ENCODE measurements at regions of chr9 and their contacts with region 1.

Region 1: DNA sequence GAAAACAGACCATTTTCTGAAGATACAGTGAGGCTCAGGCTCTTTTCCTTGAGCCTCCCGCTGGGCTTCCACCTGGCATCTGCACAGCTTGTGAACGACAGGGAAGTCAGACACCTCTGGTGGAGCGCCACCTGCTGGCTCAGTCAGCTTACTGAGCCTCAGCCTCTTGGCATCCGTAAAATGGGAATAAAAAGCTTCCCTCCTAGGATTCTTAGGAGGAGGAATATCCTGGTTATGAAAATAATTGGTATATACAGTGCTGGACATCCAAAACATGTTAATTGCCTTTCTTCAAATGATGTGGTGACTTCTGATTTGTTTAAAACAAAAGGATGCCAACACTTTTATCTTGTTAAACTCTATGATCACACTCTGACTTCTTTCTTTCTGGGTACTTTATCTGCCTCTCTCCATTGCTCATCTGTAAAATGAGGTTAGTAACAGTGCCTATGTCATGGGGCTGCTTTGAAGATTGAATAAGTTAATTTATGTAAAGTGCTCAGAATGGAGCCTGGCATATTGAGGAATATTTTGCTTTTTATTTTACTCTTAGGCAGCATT is 67.5 kb downstream of the MAMDC2 start:
- H3K4me3 ChIP-seq: no peak overlapping the region
- H3K27ac ChIP-seq: no peak overlapping the region
- H3K4me1 ChIP-seq: no peaks in the 10 kb centered on the region
- CTCF ChIP-seq: peak; percentile 48; the same call in 1 of the 2 replicates

Region 2: DNA sequence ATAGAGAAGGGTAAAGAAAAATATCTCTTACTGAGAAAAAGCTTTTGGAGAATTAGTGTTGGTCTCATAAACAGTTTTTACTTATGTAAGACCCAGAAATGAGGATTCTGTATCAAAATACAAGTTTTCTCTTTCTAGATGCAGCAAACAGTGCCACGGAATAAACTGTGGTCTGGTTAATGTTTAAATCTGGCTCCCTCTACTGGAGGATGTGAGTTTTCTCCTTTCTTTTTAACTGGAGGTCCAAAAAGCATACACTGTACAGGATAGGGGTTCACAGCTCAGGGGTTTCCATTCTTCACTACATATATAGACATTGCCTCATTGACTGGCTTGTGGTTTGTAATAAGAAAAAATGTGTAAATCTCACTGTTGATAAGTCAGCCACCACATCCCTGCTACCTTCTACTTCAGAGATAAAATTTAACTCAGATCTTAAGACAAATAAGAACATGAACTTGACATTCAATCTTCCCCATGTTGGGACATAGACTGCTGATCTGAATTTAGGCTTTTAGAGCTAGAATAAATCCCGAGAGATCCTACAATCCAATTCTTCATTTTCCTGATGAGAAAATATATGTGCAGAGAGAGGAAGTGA is 191.6 kb before region 1 on chr9:
- CTCF ChIA-PET with region 1: interaction called, 22 read pairs
- POLR2A ChIA-PET with region 1: no interaction called
- H3K4me3 ChIP-seq: no peak overlapping the region
- H3K27ac ChIP-seq: no peak overlapping the region
- H3K4me1 ChIP-seq: no peaks in the 10 kb centered on the region
- CTCF ChIP-seq: no peak

Region 3: GRCh38 chr9:69981686-69982450 is 129.3 kb before region 1 on chr9:
- CTCF ChIA-PET with region 1: interaction called, 484 read pairs
- POLR2A ChIA-PET with region 1: no interaction called
- H3K4me3 ChIP-seq: no peak overlapping the region
- H3K27ac ChIP-seq: no peak overlapping the region
- H3K4me1 ChIP-seq: no peaks in the 10 kb centered on the region
- CTCF ChIP-seq: no peak

Region 4: DNA sequence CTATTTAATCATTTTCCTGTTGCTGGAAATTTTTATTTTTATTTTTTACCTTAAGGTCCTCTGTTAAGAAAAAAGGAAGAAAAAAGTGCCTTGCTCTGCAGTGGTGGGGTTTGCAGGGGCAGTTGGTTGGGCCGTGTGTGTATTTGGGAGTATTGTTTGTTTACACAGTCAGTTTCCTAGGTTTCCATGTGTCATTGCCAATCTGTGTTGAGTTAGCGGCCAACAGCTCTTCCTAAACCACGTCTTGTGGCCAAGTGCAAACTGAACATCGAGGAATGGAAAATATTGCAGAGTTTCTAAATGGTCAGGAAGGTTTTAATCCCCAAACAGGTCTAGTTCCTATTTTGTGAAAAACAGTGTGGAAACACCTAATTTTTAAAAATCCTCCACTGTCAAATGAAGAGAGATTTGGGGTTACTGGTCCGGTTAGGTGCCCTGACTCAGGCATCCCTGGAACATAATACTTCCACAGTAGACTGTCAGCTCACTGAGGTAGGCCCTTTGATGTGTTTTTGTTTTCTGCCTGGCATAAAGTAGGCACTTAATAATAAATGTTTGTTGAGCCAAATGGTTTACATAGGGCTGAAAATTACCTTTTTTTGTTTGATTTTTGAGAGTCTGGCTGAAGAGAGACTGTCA is 30.5 kb before region 1 on chr9:
- CTCF ChIA-PET with region 1: interaction called, 14 read pairs
- POLR2A ChIA-PET with region 1: no interaction called
- H3K4me3 ChIP-seq: no peak overlapping the region
- H3K27ac ChIP-seq: no peak overlapping the region
- H3K4me1 ChIP-seq: peaks cover 7% of the 10 kb centered on the region; the same call in 1 of the 2 replicates
- CTCF ChIP-seq: no peak

Region 5: DNA sequence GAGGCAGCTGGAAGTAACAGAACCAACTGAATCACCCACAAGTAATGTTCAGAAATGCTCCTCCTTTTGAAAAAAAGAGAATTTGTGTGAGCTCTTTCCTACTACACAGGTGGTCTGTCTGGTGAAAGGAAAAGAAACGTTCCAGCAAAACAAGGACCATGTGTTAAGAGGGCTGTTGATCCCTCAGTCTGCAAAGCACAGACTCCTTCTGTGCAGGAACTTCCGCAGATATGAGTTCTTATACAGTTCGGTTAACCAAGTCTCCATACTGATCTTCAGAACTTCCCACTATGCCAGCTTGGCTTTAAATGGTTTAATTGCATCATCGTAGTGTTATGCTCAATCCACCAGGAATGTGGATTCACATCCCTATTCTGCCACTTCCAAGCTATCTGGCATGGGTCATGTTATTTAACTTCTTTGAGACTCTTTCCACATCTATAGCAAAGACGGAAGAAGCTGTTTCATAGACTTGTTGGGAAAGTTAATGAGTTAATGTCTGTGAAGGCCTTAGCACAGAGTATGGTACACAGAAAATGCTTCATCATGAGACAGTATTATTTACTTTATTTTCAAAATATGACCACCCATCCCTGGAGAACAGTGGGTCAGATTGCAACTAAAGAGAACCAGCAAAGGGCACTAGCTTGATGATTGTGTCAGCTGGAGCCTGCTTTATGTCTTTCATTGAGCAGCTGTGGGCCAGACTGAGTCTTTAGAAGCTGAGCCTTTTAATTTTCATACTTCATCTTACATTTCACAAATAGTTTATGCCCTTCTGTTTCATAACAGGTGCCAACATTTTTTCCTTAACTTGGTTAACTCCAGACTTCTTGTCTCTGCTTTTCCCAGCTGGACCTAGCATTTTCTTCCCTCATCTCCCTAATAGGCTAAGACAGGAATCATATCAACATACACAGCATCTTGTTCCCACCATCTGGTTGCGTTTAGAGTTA is 22.4 kb after region 1 on chr9:
- CTCF ChIA-PET with region 1: interaction called, 26 read pairs
- POLR2A ChIA-PET with region 1: no interaction called
- H3K4me3 ChIP-seq: no peak overlapping the region
- H3K27ac ChIP-seq: no peak overlapping the region
- H3K4me1 ChIP-seq: no peaks in the 10 kb centered on the region
- CTCF ChIP-seq: no peak

Region 6: GRCh38 chr9:70602321-70603019 is 491.3 kb after region 1 on chr9:
- CTCF ChIA-PET with region 1: interaction called, 20 read pairs
- POLR2A ChIA-PET with region 1: no interaction called
- H3K4me3 ChIP-seq: no peak overlapping the region
- H3K27ac ChIP-seq: peak overlapping the region; percentile 93; the same call in 1 of the 2 replicates
- H3K4me1 ChIP-seq: peaks cover 9% of the 10 kb centered on the region
- CTCF ChIP-seq: peak; percentile 42; the same call in 1 of the 2 replicates

Measured in HEK293 (cell line).